Heart left ventricle (tissue), 16 donors: ENCODE measurements at regions of chr10 and their contacts with region 1.

Region 1: DNA sequence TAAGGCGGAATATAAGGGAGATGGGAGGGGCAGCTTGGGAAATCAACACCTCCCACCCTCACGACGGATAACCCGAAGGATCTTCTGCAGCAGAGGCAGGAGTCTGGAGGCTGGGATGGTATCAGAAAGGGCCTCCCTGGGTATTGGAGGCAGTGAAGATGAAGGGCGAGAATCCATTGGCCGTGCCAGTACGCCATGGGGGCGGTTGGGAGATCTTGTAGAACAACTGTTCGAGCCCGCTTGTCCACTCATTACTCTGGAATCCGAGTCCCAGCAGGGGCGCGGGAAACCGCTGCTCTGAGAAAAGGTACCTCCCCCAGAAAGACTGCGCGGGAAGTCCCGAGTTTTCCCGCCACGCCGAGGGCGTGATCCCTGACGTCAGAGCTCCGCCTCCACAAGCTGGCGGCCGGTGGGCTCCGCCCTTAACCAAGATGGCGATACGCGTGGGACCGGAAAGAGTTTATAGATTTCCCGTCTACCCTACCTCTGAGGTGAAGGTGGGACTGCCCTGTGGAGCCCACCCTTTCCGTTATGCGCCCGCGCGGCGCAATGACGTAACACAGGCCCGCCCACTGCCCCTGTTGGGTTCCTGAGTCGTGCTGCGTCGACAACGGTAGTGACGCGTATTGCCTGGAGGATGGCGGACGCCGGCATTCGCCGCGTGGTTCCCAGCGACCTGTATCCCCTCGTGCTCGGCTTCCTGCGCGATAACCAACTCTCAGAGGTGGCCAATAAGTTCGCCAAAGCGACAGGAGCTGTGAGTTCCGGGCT is at the start of gene NOLC1:
- DNase-seq: peak; percentile 98 to 99 (median 99)
- ATAC-seq: peak; percentile 98 to 99 (median 99)
- H3K4me3 ChIP-seq: peak within 1 kb of the TSS; percentile 55 to 91 (median 82)
- H3K27ac ChIP-seq: peak within 1 kb of the TSS; percentile 41 to 92 (median 86)
- H3K4me1 ChIP-seq: peaks cover 4 to 42% (median 15%) of the 10 kb centered on the region in 12 donors
- H3K27me3 ChIP-seq: no peaks in the 10 kb centered on the region
- CTCF ChIP-seq: no peak
- POLR2A ChIP-seq: peak in 1 of 2 donors; percentile 83
- total RNA-seq, gene NOLC1: 24.0 to 67.5 (median 29.0) TPM

Region 2: DNA sequence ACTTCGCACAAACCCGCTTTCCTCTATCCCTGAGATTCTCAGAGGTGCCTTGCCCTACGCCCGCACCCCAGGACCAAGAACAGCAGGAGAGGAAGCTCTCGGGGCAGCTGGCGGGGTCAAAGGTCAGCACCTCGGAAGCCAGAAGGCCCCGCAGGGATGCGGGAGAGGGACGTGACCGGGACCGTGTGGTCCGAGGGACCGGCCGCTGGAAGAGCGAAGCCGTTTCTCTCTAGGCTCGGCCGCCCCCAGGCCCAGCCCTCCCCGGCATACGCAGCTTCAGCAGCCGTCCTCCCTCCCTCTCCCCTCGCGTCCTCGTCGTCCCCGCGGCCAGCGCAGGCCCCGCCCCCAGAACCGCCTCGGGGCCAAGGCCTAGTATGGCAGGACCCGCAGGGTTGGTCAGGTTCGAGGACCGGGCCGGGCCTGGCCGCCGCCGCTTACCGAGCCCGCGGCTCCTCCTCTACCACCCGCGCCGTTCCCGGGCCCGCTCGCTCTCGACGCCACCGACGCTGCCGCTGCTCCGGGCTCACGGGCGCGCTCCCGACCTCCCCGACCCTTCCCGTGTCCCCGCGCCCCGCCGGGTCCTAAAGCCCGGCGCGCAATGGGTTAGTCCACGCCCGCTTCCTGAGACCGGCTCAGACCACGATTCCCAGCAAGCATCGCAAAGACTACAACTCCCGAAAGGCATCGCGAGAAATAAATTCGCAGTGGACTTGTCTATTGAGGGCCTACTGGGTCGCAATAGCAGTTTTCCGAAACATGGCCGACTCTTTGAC is 96.1 kb before region 1 on chr10 and contains the start of gene ARMH3:
- intact Hi-C with region 1: loop called in 1 of 10 experiments (anchors 1 kb)
- DNase-seq: peak; percentile 94 to 97 (median 94)
- ATAC-seq: peak; percentile 94 to 99 (median 97)
- H3K4me3 ChIP-seq: peak within 1 kb of the TSS; percentile 78 to 97 (median 92)
- H3K27ac ChIP-seq: peak within 1 kb of the TSS; percentile 88 to 99 (median 96)
- H3K4me1 ChIP-seq: peaks cover 3 to 47% (median 28%) of the 10 kb centered on the region in 12 donors
- H3K27me3 ChIP-seq: no peaks in the 10 kb centered on the region
- CTCF ChIP-seq: no peak
- POLR2A ChIP-seq: peak in 1 of 2 donors; percentile 77
- total RNA-seq, gene ARMH3: 28.5 to 84.2 (median 45.4) TPM

Region 3: DNA sequence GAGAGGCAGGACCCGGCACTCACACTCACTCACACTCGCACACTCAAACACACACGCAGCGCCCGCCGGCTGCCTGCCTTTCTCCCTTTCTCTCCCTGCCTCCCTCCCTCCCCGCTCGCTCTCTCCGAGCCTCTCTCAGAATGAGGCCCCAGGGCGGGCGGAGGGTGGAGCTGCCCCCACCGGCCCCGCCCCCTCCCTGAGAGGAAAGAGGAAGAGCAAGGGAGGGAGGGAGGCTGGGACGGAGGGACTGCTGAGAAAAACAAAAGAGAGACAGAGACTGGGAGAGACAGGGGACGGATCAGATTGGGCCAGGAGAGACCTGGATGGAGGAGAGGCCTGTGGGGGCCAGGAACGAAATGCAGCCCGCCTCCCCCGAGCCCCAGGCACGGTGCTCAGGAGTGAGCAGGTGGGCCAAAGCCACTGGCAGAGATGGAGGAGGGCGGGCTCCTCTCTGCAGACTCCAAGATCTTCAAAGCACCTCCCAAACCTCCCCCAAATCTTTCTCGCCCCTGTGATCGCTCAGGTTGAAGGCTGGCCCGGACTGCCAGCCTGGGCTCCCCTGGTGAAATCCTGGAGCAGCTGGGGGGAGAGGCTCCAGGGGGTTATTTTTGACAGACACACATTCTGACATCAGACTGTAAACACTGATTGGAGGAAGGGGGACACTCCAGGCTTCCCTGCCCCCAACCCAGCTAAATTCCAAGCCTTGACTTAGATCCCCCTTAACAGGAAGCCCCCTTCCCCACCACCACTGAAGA is 36.9 kb before region 1 on chr10:
- intact Hi-C with region 1: no loop called
- DNase-seq: peak; percentile 92 to 94 (median 93)
- ATAC-seq: peak; percentile 70 to 84 (median 81)
- H3K4me3 ChIP-seq: peak overlapping the region; percentile 54 to 90 (median 73)
- H3K27ac ChIP-seq: peak overlapping the region; percentile 75 to 99 (median 95)
- H3K4me1 ChIP-seq: peaks cover 4 to 72% (median 63%) of the 10 kb centered on the region in 12 donors
- H3K27me3 ChIP-seq: no peaks in the 10 kb centered on the region
- CTCF ChIP-seq: no peak
- POLR2A ChIP-seq: peak in 1 of 2 donors; percentile 54

Region 4: GRCh38 chr10:102132563-102133372 is 19.2 kb before region 1 on chr10 and contains the start of gene PPRC1:
- intact Hi-C with region 1: loop called in 6 of 10 experiments (anchors 1 to 2 kb)
- DNase-seq: peak; percentile 98 to 100 (median 99)
- ATAC-seq: peak; percentile 93 to 97 (median 96)
- H3K4me3 ChIP-seq: peak within 1 kb of the TSS; percentile 67 to 99 (median 87)
- H3K27ac ChIP-seq: peak within 1 kb of the TSS; percentile 75 to 99 (median 96)
- H3K4me1 ChIP-seq: peaks cover 0 to 42% (median 32%) of the 10 kb centered on the region in 12 donors
- H3K27me3 ChIP-seq: no peaks in the 10 kb centered on the region
- CTCF ChIP-seq: peak; percentile 87 to 97 (median 92)
- POLR2A ChIP-seq: peak in 1 of 2 donors; percentile 77
- total RNA-seq, gene PPRC1: 10.0 to 21.5 (median 14.9) TPM